ENCODE measurements at regions of chr7 and their contacts with region 1.

Region 1: GRCh38 chr7:85750454-85750949 is 563.6 kb upstream of the SEMA3D start:
- DNase-seq: peak; percentile 84
- ATAC-seq: peak; percentile 86
- H3K4me3 ChIP-seq: no peak overlapping the region
- H3K27ac ChIP-seq: no peak overlapping the region
- H3K4me1 ChIP-seq: peaks cover 19% of the 10 kb centered on the region
- H3K27me3 ChIP-seq: no peaks in the 10 kb centered on the region
- CTCF ChIP-seq: peak; percentile 82

Region 2: GRCh38 chr7:85324145-85324799 is 426.2 kb before region 1 on chr7:
- CTCF ChIA-PET with region 1: no interaction called
- POLR2A ChIA-PET with region 1: no interaction called
- intact Hi-C with region 1: no loop called
- DNase-seq: peak; percentile 70
- ATAC-seq: peak; percentile 93
- H3K4me3 ChIP-seq: no peak overlapping the region
- H3K27ac ChIP-seq: peak overlapping the region; percentile 37; the same call in 1 of the 2 replicates
- H3K4me1 ChIP-seq: peaks cover 25% of the 10 kb centered on the region
- H3K27me3 ChIP-seq: no peaks in the 10 kb centered on the region
- CTCF ChIP-seq: no peak

Region 3: DNA sequence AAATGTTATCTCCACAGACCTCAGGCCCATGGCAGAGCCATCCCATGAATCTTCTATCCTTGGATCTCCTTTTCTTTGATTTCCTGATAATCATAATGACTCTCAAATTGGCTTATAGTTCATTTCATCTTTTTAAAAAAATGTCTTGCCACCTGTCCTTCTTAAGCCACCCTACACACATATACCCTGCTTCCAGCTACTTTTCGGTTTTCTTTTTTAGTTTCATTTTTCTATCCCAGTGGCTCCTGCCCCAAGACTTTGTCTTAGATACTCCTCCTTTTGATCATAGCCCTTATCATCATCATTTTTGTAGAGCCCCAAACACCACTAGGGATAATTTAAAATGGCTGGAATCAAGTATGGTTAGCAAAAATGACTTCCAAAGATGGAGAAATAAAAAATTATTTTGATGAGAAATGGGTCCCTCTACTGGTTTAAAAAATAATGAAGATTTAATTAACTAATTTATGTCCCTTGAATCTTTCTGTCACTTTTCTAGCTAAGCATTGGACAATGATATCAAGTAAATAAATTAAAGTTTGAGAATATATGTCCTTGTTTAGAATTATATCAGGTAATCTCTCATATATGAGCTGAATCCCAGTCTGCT is 286.4 kb before region 1 on chr7:
- CTCF ChIA-PET with region 1: no interaction called
- POLR2A ChIA-PET with region 1: no interaction called
- intact Hi-C with region 1: loop called (anchors 2 kb)
- DNase-seq: peak; percentile 36
- ATAC-seq: peak; percentile 22; the same call in 1 of the 2 replicates
- H3K4me3 ChIP-seq: no peak overlapping the region
- H3K27ac ChIP-seq: no peak overlapping the region
- H3K4me1 ChIP-seq: no peaks in the 10 kb centered on the region
- H3K27me3 ChIP-seq: no peaks in the 10 kb centered on the region
- CTCF ChIP-seq: peak; percentile 52

Region 4: DNA sequence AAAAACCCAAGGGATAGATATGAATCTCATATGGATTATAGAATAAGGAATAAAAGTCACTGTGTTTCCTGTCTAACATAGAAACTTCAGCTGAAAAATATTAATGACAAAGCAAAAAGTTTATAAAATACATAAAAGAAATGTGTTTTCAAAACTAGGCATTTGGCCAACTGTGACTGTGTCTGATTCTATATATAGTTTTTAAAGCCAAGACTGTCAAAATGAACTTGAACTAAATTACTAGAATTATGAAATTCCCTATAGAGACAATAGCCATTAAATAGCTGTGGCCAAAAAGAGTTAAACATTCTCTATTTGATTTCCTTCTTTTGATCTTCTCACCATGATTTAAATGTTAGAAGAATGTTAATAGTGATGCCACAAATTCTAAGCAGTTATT is 252.5 kb before region 1 on chr7:
- CTCF ChIA-PET with region 1: no interaction called
- POLR2A ChIA-PET with region 1: no interaction called
- intact Hi-C with region 1: loop called (anchors 1 kb)
- DNase-seq: no peak
- ATAC-seq: no peak
- H3K4me3 ChIP-seq: no peak overlapping the region
- H3K27ac ChIP-seq: no peak overlapping the region
- H3K4me1 ChIP-seq: no peaks in the 10 kb centered on the region
- H3K27me3 ChIP-seq: no peaks in the 10 kb centered on the region
- CTCF ChIP-seq: no peak

Region 5: GRCh38 chr7:85554236-85555178 is 196.0 kb before region 1 on chr7:
- CTCF ChIA-PET with region 1: no interaction called
- POLR2A ChIA-PET with region 1: no interaction called
- intact Hi-C with region 1: loop called (anchors 1 kb)
- DNase-seq: peak; percentile 82
- ATAC-seq: peak; percentile 57
- H3K4me3 ChIP-seq: no peak overlapping the region
- H3K27ac ChIP-seq: no peak overlapping the region
- H3K4me1 ChIP-seq: no peaks in the 10 kb centered on the region
- H3K27me3 ChIP-seq: no peaks in the 10 kb centered on the region
- CTCF ChIP-seq: peak; percentile 79

Region 6: GRCh38 chr7:85695041-85695996 is 55.2 kb before region 1 on chr7:
- CTCF ChIA-PET with region 1: interaction called, 4 read pairs
- POLR2A ChIA-PET with region 1: no interaction called
- intact Hi-C with region 1: loop called (anchors 2 kb)
- DNase-seq: peak; percentile 95
- ATAC-seq: peak; percentile 92
- H3K4me3 ChIP-seq: peak overlapping the region; percentile 52
- H3K27ac ChIP-seq: peak overlapping the region; percentile 85
- H3K4me1 ChIP-seq: peaks cover 37% of the 10 kb centered on the region
- H3K27me3 ChIP-seq: no peaks in the 10 kb centered on the region
- CTCF ChIP-seq: no peak

Region 7: GRCh38 chr7:85719981-85720963 is 30.2 kb before region 1 on chr7:
- CTCF ChIA-PET with region 1: interaction called, 4 read pairs
- POLR2A ChIA-PET with region 1: interaction called, 3 read pairs
- intact Hi-C with region 1: loop called (anchors 2 kb)
- DNase-seq: peak; percentile 80
- ATAC-seq: peak; percentile 90
- H3K4me3 ChIP-seq: peak overlapping the region; percentile 42; the same call in 1 of the 2 replicates
- H3K27ac ChIP-seq: peak overlapping the region; percentile 91
- H3K4me1 ChIP-seq: peaks cover 23% of the 10 kb centered on the region
- H3K27me3 ChIP-seq: no peaks in the 10 kb centered on the region
- CTCF ChIP-seq: no peak

Region 8: GRCh38 chr7:85829817-85830432 is 79.4 kb after region 1 on chr7:
- CTCF ChIA-PET with region 1: no interaction called
- POLR2A ChIA-PET with region 1: no interaction called
- intact Hi-C with region 1: loop called (anchors 2 kb)
- DNase-seq: peak; percentile 58
- ATAC-seq: peak; percentile 77
- H3K4me3 ChIP-seq: no peak overlapping the region
- H3K27ac ChIP-seq: no peak overlapping the region
- H3K4me1 ChIP-seq: no peaks in the 10 kb centered on the region
- H3K27me3 ChIP-seq: no peaks in the 10 kb centered on the region
- CTCF ChIP-seq: peak; percentile 72

Region 9: GRCh38 chr7:85997515-85997914 is 247.0 kb after region 1 on chr7:
- CTCF ChIA-PET with region 1: no interaction called
- POLR2A ChIA-PET with region 1: no interaction called
- intact Hi-C with region 1: no loop called
- DNase-seq: peak; percentile 7
- ATAC-seq: peak; percentile 65
- H3K4me3 ChIP-seq: no peak overlapping the region
- H3K27ac ChIP-seq: no peak overlapping the region
- H3K4me1 ChIP-seq: no peaks in the 10 kb centered on the region
- H3K27me3 ChIP-seq: no peaks in the 10 kb centered on the region
- CTCF ChIP-seq: no peak

Measured in PC-3 (cell line).